GM10248 (cell line): ENCODE measurements at regions of chr5 and their contacts with region 1.

Region 1: DNA sequence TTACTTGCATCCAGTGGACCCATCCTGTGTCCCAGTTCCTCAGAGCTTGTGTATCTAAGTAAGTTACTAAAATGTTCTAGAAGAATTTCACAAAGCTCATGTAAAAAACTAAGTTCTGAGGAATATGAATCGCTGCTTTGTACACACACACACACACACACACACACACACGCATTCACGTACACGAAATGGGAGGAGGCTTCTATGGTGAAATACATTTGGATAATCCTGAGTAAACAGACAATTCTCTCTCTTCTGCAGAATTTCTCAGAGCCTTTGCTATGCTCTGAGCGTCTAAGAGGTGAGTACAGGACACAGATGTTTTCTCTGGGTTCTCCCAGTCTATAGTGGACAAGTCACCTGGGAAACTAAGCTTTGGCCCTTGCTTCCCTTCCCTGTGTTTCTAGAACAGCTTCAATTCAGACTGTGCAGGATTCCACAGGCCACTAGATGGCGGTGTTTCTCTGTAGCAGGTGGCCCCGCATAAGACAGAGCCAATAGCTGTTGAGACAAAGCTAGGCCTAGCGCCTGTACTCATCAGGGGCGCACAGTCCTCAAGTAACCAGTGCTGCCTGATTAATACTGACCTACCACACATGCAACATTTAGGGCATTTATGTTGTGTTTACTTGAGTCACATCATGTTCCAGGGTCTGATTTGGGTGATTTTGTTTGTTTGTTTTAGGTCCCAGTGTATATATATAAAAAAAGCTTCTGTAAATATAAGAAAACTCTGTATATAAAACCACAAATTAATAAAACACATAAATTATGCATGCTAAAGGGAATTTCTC is 114.8 kb downstream of the LIFR start:
- DNase-seq: peak; percentile 79
- CTCF ChIP-seq: peak; percentile 97

Region 2: DNA sequence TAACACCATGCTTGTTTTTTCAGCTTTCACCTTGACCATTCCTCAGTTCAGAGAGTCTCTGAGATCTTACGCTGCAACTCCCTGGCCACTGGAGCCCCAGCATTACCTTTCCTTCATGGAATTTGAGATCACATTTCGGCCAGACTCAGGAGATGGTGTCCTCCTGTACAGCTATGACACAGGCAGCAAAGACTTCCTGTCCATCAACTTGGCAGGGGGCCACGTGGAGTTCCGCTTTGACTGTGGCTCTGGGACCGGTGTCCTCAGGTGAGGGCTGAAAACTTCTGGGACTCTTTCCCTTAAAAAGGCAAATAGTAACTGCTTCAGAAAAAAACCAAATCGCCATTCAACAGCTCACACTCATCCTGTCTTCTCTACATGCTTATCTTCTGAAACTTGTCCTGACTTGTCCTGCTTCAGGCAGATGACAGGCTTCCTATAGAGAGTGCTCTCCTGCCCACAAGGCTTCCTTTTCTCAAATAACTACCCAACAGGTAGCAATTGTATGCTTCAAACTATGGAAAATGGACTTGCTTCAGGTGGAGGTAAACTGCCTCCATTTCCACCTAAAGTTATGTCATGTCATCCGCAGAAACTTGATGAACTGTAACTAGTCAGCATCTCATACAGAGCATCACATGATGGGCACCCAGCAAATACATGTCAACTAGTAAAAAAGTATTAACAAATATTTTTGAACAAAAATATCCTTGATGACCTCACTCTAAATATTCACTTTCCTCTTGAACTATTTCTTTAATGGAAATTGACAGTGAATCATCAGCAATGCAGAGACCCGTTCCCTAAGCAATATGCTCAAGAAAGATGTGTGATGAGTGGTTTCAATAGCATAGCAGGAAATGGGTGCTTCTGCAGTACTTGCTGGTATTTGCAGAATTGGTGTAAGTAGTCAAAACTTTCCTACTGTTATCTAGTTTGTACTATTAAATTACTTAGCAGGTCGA is 14.4 kb before region 1 on chr5:
- CTCF ChIA-PET with region 1: interaction called, 30 read pairs
- POLR2A ChIA-PET with region 1: no interaction called
- DNase-seq: no peak
- CTCF ChIP-seq: no peak

Region 3: DNA sequence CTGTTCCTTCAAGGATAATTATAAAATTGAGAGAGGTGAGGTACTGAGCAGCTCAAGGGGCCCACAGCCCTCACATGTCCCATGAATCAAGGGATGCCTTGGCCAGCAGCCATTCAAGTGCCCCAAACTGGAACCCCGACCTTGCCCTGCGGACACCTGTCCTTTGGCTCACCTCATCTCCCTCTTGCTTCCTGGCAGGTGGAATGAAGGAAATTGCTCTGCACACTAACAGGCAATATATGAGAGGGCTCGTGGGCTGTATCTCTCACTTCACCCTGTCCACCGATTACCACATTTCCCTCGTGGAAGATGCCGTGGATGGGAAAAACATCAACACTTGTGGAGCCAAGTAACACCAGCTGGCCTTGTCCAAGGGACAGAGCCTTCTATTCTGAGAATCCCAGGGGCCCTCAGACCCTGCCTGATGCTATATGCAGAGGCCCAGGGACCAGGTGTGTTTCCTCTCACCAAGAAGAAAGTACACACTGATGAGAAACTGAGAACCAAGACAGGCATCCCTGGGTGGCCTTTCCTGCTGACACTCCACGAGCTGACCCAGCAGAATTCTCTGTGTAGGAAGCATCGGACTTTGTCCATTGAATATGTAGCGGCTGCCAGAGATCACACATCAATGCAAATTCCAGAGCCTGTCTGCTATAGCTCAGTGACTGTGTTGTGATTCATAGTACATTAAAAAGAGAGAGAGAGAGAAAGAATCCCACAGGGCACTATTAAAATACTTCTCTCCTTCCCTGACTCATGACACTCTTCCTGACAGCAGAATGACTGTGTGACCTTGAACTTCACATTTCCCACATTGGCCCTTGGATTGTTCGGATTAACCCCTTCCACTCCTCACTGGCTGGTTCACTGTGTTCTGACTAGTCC is 22.2 kb after region 1 on chr5:
- CTCF ChIA-PET with region 1: interaction called, 20 read pairs
- POLR2A ChIA-PET with region 1: no interaction called
- DNase-seq: no peak
- CTCF ChIP-seq: no peak

Region 4: GRCh38 chr5:38622723-38623129 is 181.1 kb after region 1 on chr5:
- CTCF ChIA-PET with region 1: no interaction called
- POLR2A ChIA-PET with region 1: no interaction called
- DNase-seq: no peak
- CTCF ChIP-seq: no peak

Region 5: DNA sequence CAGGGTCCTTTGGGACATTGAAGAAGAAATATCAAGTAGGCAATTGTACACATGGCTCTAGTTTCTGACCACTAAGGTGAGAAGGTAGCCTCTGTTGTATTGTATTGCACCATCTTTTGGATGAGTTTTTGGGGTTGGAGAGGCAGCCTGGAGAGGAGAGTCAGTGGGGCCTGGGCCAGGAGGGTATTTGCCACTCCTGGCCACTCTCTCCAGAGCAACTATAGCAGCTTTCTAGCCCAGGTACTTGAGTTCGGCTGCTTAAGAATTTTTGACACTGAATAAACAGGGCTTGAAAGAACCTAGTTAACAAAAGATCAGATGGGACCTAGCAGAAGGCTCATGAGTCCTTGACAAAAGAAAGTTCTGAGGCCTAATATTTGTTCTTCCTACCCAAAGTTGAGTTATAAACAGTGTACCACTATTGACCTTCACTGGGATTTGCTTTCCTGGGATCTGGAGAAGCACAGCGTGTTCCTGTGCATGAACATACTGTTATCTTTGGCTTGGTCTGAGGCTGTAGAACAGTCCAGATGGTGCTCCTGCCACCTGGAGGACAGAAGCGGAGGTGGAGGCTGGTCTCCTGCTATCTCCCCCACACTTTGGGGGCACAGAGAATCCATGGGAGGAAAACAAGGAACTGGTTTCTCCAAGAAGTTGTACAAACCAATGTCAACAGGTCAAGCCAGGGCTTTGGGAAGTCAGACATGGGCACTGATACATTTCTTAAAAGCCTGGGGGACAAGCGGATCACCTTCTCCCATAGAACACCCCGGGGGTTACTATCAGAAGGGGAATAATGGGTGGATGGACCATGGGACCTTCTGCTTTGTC is 225.2 kb after region 1 on chr5:
- CTCF ChIA-PET with region 1: interaction called, 12 read pairs
- POLR2A ChIA-PET with region 1: no interaction called
- DNase-seq: peak; percentile 13
- CTCF ChIP-seq: peak; percentile 22

Region 6: DNA sequence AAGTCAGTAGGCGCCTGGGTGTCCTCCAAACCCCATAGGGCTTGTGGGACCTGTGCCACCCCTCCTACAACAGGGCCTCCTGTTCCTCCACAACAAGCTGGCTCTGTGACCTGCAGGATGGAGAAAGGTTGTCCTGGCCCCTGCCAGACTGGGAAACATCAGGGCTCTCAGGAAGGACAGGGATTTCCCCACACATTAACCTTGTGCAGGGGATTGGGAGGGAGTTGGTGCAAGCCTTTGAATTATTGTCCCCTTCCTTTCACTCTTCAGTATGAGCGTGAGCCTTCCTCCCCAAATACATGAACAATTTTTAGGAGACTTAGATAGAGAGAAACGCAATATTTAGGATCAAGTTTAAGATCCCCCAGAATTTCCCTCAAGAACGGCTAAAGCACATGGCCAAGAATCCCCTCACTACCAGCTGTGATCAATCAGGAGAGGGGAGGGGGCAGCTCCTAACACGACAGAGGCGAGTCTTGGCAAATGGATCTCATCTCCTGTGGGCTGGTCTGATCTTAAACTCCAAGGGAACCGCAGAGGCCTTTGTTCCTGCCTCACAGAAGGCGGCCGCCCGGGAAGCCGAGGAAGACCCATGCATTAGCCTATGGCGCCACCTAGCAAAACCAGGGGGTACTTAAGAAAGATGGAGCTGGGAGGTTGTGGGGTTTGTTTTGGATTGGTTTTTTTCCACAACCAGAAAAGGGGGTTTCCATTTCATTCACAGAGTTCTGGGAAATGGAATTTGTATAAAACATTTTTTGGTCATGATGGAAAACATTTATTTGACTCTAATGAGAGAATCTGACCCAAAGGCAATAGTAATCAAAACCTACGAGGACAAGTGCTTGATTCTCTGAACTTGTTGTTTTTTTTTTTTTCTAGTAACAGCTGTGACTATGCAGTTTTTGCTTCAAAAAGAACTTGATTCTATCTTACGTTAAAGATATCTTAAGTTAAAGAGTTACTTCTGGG is 368.0 kb after region 1 on chr5:
- CTCF ChIA-PET with region 1: interaction called, 94 read pairs
- POLR2A ChIA-PET with region 1: no interaction called
- DNase-seq: peak; percentile 68
- CTCF ChIP-seq: peak; percentile 53

Region 7: GRCh38 chr5:38922199-38922598 is 480.5 kb after region 1 on chr5:
- CTCF ChIA-PET with region 1: interaction called, 32 read pairs
- POLR2A ChIA-PET with region 1: no interaction called
- DNase-seq: peak; percentile 67
- CTCF ChIP-seq: peak; percentile 71

Region 8: GRCh38 chr5:39040875-39041274 is 599.2 kb after region 1 on chr5:
- CTCF ChIA-PET with region 1: no interaction called
- POLR2A ChIA-PET with region 1: no interaction called
- DNase-seq: no peak
- CTCF ChIP-seq: no peak